ENCODE measurements at regions of chr3 and their contacts with region 1.

Region 1: DNA sequence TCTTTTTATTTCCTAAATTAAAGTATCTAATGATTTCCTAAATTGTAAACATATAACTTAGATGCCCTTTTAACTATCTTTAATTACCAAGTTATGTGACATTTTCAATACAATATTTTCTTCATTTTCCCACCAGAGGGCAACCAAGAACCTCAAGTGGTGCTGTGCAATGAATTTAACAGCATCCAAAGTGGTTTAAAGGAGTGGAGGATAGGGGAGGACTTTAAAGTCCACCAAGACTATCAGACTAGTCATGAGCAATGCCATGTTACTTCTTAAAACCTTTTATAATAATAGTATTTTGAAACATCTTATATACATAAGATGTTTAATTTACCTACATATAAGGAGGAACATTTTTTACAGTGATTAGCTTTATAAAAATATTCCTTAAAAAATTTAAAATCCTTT is 74.4 kb downstream of the DLG1 start:
- DNase-seq: no peak
- H3K4me3 Mint-ChIP-seq: no peak overlapping the region
- H3K27ac Mint-ChIP-seq: no peak overlapping the region
- H3K4me1 Mint-ChIP-seq: peaks cover 28% of the 10 kb centered on the region
- H3K27me3 Mint-ChIP-seq: no peaks in the 10 kb centered on the region

Region 2: GRCh38 chr3:196287440-196288148 is 936.4 kb before region 1 on chr3 and contains the start of gene PCYT1A:
- intact Hi-C with region 1: no loop called
- DNase-seq: peak; percentile 72
- H3K4me3 Mint-ChIP-seq: peak within 1 kb of the TSS; percentile 99
- H3K27ac Mint-ChIP-seq: peak within 1 kb of the TSS; percentile 95
- H3K4me1 Mint-ChIP-seq: peaks cover 44% of the 10 kb centered on the region
- H3K27me3 Mint-ChIP-seq: no peaks in the 10 kb centered on the region
- total RNA-seq, gene PCYT1A: 54.7 and 57.0 TPM in 2 replicates

Region 3: DNA sequence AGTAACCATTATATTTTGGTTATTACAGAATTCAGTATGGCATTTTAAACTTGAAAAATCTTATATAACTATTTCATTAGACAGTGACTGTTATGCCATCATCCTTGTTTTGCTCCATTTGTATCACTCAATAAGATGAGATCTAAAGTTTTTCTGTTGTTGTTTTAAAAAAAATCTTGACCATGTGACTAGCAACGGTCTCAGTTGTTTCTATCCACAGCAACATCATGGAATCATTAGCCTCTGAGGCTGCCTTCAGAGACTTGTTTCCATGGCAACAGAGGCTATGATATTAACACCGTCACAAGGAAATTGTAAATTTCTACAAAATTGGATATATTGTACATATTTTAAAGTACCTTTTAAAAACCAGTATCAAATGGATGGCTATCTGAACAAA is 55.4 kb before region 1 on chr3:
- intact Hi-C with region 1: no loop called
- DNase-seq: no peak
- H3K4me3 Mint-ChIP-seq: no peak overlapping the region
- H3K27ac Mint-ChIP-seq: no peak overlapping the region
- H3K4me1 Mint-ChIP-seq: no peaks in the 10 kb centered on the region
- H3K27me3 Mint-ChIP-seq: no peaks in the 10 kb centered on the region

Region 4: GRCh38 chr3:197394464-197395321 is 170.7 kb after region 1 on chr3:
- intact Hi-C with region 1: no loop called
- DNase-seq: peak; percentile 37
- H3K4me3 Mint-ChIP-seq: peak overlapping the region; percentile 62
- H3K27ac Mint-ChIP-seq: peak overlapping the region; percentile 24
- H3K4me1 Mint-ChIP-seq: peaks cover 26% of the 10 kb centered on the region
- H3K27me3 Mint-ChIP-seq: no peaks in the 10 kb centered on the region

Region 5: DNA sequence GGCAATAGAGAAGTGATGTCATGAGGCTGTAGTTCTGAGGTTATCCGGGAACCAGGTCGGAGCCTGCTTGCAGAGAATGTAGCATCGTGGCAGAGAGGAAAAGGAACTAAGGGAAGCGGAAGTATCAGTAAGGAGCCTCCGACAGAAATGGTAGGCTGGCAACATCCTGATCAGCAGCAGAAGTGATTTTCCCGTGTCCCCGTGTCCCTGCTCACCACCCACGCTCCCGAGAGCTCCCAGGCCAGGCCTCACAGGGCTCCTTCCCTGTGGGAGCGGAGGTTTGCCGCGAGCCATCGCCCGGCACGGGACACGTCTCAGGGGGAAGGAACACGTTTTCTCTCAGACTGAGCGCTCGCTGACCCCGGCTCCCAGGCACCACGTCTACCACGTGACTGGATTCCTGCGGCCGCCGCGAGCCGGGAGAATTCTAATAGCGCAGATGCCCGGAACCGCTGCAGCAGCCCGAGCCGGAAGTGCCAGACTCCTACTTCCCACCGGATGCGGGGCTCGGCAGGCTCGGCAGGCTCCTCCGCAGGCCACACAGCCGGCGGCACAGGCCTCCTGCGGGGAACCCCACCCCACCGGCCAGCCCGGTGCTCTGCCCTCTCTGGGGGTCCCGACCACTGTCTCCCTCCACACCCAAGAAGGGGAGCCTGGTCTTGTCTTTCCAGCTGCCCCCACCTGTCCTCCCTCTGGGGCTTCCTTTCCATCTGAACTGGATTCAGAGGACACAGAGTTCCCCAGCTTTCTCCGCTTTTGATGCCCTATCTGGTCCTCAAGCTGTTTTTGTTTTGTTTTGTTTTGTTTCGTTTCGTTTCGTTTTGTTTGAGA is 232.4 kb after region 1 on chr3:
- intact Hi-C with region 1: loop called (anchors 1 kb)
- DNase-seq: peak; percentile 36
- H3K4me3 Mint-ChIP-seq: peak overlapping the region; percentile 87
- H3K27ac Mint-ChIP-seq: peak overlapping the region; percentile 88
- H3K4me1 Mint-ChIP-seq: peaks cover 22% of the 10 kb centered on the region
- H3K27me3 Mint-ChIP-seq: peaks cover 22% of the 10 kb centered on the region

Region 6: GRCh38 chr3:197501879-197502620 is 278.0 kb after region 1 on chr3:
- intact Hi-C with region 1: loop called (anchors 1 kb)
- DNase-seq: peak; percentile 20
- H3K4me3 Mint-ChIP-seq: no peak overlapping the region
- H3K27ac Mint-ChIP-seq: no peak overlapping the region
- H3K4me1 Mint-ChIP-seq: no peaks in the 10 kb centered on the region
- H3K27me3 Mint-ChIP-seq: no peaks in the 10 kb centered on the region

Region 7: DNA sequence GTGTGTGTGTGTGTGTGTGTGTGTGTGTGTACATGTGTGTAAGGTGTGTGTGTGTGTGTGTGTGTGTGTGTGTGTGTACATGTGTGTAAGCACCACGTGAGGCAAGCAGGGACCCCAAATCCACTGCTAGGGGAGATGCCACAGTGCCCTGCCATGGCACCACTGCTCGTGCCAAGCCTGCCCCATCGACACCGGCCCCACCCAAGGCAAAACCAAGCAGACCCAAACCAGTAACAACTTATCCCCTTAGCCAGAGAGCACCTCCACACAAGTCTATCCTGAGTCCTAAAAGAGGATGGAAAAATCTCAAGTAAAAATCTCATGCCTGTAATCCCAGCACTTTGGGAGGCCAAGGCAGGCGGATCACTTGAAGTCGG is 286.6 kb after region 1 on chr3:
- intact Hi-C with region 1: loop called (anchors 1 kb)
- DNase-seq: no peak
- H3K4me3 Mint-ChIP-seq: no peak overlapping the region
- H3K27ac Mint-ChIP-seq: no peak overlapping the region
- H3K4me1 Mint-ChIP-seq: peaks cover 5% of the 10 kb centered on the region
- H3K27me3 Mint-ChIP-seq: no peaks in the 10 kb centered on the region

Measured in activated T-helper 1 cell treated with anti-CD3 and anti-CD28 coated beads, Interleukin-12 subunit alpha, Interleukin-12 subunit beta, Interleukin-2, Interleukin-4 antibody, amounts not matched to agents 30 ng/mL and 10 ng/mL and 1 ng/mL, durations not matched to agents 14 hours and 24 hours and 36 hours (primary cell).